ENCODE measurements at regions of chr13 and their contacts with region 1.

Region 1: GRCh38 chr13:50911937-50912795 is 2.6 kb downstream of the RNASEH2B start:
- H3K4me3 Mint-ChIP-seq: peak overlapping the region; percentile 39
- H3K27ac Mint-ChIP-seq: peak overlapping the region; percentile 73
- H3K4me1 Mint-ChIP-seq: peaks cover 51% of the 10 kb centered on the region
- H3K27me3 Mint-ChIP-seq: no peaks in the 10 kb centered on the region

Region 2: DNA sequence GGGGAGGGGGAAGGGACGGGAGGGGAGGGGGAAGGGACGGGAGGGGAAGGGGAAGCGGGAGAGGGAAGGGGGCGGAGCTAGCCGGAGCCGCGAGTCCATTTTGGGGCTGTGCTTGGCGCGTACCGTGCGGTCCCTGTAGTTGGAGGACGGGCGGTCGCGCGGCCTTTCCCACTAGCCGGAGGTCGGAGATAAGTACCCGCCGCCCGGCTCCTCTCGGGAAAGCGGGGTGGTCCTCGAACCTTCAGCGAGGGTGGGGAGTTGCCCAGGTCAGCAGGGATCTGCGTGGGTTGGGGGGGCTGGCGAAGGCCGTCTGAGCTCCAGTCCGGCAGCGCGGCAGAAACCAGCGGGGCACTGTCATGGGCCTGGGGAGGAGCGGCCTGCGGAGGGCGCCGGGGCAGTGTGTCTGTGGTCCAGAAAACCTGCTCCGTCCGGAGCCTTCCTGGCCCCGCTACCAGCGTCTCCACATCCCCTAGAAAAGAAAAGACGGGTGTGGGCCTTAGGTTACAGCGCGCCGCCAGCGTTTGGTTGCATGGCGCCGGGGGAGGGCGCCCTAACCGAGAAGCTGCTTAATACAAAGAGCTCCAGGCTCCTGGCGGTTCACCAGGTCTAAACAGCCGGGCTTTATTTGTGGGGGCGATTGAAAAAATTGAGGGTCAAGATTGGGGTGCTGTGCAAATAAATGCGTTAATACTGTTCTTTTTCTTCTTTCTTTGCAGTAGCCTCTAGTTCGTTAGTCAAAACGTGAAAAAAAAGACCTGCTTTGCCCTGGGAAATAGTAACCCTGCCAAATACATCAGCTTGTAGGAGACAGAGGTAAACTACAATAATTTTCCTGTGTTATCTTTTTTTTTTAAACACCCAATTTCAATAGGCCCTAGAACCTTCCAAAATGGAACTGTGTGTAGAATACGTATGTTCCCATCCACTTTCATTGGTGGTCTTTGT is 914.9 kb before region 1 on chr13 and contains the start of gene TRIM13:
- intact Hi-C with region 1: loop called (anchors 5 kb)
- H3K4me3 Mint-ChIP-seq: peak within 1 kb of the TSS; percentile 83
- H3K27ac Mint-ChIP-seq: peak within 1 kb of the TSS; percentile 97
- H3K4me1 Mint-ChIP-seq: peaks cover 36% of the 10 kb centered on the region
- H3K27me3 Mint-ChIP-seq: no peaks in the 10 kb centered on the region

Region 3: DNA sequence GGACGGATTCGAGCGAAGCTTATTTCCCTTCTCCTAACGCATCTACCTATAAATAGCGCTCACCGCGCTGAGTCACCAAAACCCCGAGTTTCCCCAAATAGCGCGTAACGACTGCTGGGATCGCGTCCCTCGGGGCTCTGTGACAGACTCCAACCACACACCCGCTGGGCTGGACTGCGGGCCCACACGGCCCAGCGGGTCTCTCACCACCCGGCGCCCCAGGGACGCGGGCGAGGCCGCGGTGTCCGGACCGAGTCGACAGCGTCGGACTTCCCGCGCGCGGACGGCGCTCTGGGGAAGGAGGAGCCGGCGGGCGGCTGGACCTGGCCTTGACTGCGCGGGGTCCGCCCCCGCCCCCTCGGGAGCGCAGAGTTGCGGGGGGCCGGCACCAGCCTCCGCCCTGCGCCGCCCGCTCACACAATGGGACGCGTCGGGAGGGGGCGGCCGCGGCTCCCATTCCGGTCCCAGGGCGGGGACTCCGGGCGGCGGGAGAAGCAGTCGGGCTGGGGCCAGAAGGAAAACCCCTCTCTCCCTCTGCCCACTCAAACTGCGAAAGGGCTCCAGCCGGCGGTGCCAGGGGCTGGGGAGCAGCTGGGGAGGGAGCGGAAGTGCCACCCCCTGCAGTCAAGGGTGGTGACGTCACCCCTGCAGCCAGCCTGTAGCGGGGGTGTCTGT is 788.2 kb before region 1 on chr13:
- intact Hi-C with region 1: loop called (anchors 5 kb)
- H3K4me3 Mint-ChIP-seq: peak overlapping the region; percentile 90
- H3K27ac Mint-ChIP-seq: peak overlapping the region; percentile 85
- H3K4me1 Mint-ChIP-seq: peaks cover 66% of the 10 kb centered on the region
- H3K27me3 Mint-ChIP-seq: peaks cover 11% of the 10 kb centered on the region

Region 4: DNA sequence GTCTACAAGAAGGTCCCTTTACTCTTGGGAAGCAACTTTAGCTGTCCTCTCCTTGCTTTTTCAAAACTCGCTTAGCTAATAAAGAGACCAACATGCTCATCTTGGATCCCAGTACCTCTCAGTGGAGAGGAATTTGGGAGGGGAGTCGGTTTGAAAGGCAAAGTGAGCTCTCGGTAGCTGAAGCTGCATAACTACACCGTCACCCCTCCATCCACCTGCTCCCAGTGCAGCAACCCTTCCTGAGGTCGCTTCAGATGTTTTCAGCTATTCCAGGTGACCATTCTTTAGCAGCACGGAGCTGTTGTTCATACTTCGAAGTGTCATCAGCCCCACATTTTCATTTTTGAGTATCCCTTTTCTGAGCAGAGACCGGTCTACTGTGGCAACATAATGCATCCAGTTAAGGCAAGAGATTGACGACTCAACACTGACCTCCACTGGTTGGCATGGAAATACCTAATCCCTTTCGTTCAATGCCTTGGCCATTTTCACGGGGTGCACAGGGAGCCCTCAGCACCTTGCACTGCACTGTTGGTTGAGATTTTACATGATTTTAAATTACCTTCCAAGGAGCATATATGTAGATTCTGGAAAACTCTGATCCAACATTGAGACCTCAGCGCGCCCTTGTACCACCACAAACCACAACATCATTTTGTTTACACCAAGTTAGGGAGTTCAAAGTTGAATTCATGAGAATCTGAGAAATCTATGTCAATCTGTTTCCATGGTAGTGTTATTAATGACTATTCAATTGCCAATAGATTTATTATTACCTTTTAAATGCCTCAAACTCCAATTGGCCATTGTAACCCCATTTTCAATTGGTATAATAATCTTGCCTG is 110.9 kb before region 1 on chr13:
- intact Hi-C with region 1: loop called (anchors 5 kb)
- H3K4me3 Mint-ChIP-seq: no peak overlapping the region
- H3K27ac Mint-ChIP-seq: no peak overlapping the region
- H3K4me1 Mint-ChIP-seq: peaks cover 27% of the 10 kb centered on the region
- H3K27me3 Mint-ChIP-seq: no peaks in the 10 kb centered on the region